Transverse colon (tissue), 4 donors: ENCODE measurements at regions of chr4 and their contacts with region 1.

Region 1: DNA sequence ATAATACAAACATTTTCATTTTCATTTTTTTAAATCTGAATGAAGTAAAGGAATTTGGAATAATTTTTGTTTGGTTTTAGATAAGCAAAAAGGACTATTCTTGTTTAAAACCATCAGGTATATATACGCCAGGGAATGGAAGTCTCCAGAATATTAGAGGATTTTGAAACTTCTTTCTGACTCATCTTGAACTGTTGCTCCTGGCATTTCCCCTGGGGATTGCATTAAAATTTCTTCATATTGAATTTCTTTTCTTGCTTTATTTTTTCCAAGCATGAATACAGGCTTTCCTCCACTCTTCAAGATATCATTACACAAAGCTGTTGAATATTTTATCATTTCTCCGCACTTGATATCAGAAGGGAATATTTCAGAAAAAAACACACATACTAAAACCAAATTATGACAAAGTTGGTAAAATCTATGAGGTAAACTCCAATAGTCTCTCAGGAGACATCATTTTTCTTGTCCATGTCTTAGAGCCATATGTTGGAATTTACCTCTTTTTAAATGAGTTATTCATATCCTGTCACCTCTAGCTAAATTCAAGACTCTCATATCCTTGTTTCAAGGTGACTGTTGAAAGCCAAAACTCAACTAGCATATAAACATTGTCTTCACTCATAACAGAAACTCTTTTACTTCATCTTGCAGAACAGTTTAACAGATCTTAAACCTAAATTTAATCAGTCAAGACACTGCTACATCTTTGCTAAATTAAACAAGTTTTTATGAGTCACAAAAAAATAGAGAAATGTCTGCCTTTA is 20.7 kb upstream of the CSN1S1 start:
- DNase-seq: no peak
- H3K4me3 ChIP-seq: no peak overlapping the region
- H3K27ac ChIP-seq: no peak overlapping the region
- H3K4me1 ChIP-seq: no peaks in the 10 kb centered on the region
- H3K27me3 ChIP-seq: no peaks in the 10 kb centered on the region
- CTCF ChIP-seq: no peak
- EP300 ChIP-seq: no peak
- POLR2A ChIP-seq: no peak

Region 2: GRCh38 chr4:70183168-70183939 is 273.2 kb after region 1 on chr4:
- in situ Hi-C with region 1: loop called in 2 of 4 experiments (anchors 25 kb)
- intact Hi-C with region 1: no loop called
- DNase-seq: peak; percentile 7
- H3K4me3 ChIP-seq: no peak overlapping the region
- H3K27ac ChIP-seq: no peak overlapping the region
- H3K4me1 ChIP-seq: no peaks in the 10 kb centered on the region
- H3K27me3 ChIP-seq: no peaks in the 10 kb centered on the region
- CTCF ChIP-seq: peak; percentile 47 to 60 (median 57)
- EP300 ChIP-seq: no peak
- POLR2A ChIP-seq: no peak

Region 3: DNA sequence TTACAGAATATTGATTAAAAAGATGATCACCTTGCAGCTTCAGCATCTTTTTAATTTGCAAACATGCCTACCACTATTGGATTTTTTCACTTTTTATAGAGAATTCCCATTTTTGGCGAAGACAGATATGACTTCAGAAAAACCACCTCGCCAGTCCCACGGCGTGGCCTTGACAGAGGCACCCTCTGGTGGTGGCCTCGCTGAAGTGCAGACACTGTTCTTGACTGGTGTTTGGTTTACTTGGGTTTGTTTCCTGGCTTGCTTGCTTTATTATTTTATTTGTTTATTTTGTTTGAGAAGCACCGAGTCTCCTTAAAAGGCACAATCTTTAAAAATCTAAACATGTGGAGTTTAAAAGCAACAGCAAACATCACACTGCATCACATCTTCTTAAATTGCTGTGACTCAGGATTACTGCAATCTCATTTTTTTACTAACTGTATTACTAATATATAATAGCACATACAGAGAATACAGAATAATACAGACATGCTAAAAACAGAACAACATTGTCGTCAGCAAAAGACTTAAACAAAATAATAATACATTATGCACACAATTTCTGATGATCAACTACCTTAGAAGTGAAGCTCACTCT is 595.1 kb after region 1 on chr4:
- in situ Hi-C with region 1: loop called in 1 of 4 experiments (anchors 25 kb)
- intact Hi-C with region 1: no loop called
- DNase-seq: peak; percentile 55
- H3K4me3 ChIP-seq: no peak overlapping the region
- H3K27ac ChIP-seq: no peak overlapping the region
- H3K4me1 ChIP-seq: peaks cover 0 to 4% (median 0%) of the 10 kb centered on the region in 4 donors
- H3K27me3 ChIP-seq: peaks cover 8% of the 10 kb centered on the region
- CTCF ChIP-seq: peak; percentile 70 to 87 (median 76)
- EP300 ChIP-seq: no peak
- POLR2A ChIP-seq: no peak